Activated CD4-positive, alpha-beta T cell treated with anti-CD3 and anti-CD28 coated beads for 36 hours (primary cell): ENCODE measurements at regions of chr13 and their contacts with region 1.

Region 1: DNA sequence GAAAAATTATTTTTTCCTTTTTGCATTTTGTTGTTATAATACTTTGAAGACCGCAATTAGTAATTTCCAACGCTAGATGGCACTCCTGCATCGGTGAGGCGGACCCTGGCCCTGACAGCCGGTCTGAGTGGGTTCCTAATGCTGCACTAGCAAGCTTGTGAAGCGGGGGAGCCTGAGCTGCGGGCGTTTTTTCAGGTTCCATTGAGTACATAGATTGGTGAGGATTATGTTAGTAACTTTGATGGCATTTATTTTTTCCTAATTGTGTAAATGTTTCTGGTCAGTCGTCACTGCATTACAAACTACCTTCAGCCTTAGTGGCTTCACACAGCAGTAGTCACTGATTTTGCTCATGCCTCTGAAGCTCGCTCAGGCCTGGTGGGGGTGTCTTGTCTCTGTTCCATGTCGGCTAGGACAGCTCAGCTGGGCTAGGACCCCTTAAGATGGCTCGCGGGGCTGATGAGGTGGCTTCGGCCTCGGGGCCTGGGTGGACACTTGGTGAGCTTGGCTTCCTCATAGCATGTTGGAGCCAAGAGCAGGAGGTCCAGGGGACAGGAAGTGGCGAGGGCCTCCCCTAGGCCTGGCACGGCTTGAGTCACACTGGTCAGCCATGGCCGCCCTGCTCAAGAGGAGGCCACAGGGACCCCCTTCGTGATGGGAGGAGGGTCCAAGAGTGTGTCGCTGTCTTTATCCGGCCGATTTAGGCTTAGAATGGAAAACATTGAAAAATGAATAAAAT is 25.0 kb downstream of the ERCC5 start:
- DNase-seq: peak; percentile 66
- ATAC-seq: peak; percentile 58
- H3K4me3 Mint-ChIP-seq: no peak overlapping the region
- H3K27ac Mint-ChIP-seq: peak overlapping the region; percentile 21
- H3K4me1 Mint-ChIP-seq: peaks cover 30% of the 10 kb centered on the region
- H3K27me3 Mint-ChIP-seq: no peaks in the 10 kb centered on the region

Region 2: GRCh38 chr13:102580552-102581169 is 290.2 kb before region 1 on chr13:
- CTCF ChIA-PET with region 1: interaction called, 11 read pairs
- POLR2A ChIA-PET with region 1: no interaction called
- intact Hi-C with region 1: no loop called
- DNase-seq: peak; percentile 35
- ATAC-seq: peak; percentile 78
- H3K4me3 Mint-ChIP-seq: no peak overlapping the region
- H3K27ac Mint-ChIP-seq: no peak overlapping the region
- H3K4me1 Mint-ChIP-seq: peaks cover 7% of the 10 kb centered on the region
- H3K27me3 Mint-ChIP-seq: peaks cover 7% of the 10 kb centered on the region

Region 3: DNA sequence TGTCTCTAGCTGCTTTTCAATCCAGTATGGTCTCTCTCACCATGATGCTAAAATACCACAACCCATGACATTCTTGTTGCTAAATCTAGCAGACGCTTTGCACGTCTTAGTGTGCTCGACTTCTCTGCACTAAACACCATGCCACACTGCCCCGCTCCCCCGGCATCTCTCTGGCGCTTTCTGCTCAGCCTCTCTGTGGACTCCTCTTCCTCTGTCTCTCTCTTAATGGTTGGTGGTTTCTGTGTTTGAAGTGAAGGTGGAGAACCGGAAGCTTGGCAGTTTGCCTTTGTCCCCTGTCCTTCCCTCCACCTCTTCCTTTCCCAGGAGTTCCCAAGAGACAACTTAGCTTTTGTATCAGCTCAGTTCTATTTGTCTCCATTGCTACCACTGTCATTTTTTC is 16.2 kb before region 1 on chr13:
- CTCF ChIA-PET with region 1: interaction called, 24 read pairs
- POLR2A ChIA-PET with region 1: no interaction called
- intact Hi-C with region 1: no loop called
- DNase-seq: peak; percentile 30
- ATAC-seq: peak; percentile 74
- H3K4me3 Mint-ChIP-seq: no peak overlapping the region
- H3K27ac Mint-ChIP-seq: peak overlapping the region; percentile 74
- H3K4me1 Mint-ChIP-seq: peaks cover 37% of the 10 kb centered on the region
- H3K27me3 Mint-ChIP-seq: no peaks in the 10 kb centered on the region

Region 4: GRCh38 chr13:103762523-103762922 is 891.7 kb after region 1 on chr13:
- CTCF ChIA-PET with region 1: no interaction called
- POLR2A ChIA-PET with region 1: no interaction called
- intact Hi-C with region 1: no loop called
- DNase-seq: no peak
- ATAC-seq: no peak
- H3K4me3 Mint-ChIP-seq: no peak overlapping the region
- H3K27ac Mint-ChIP-seq: no peak overlapping the region
- H3K4me1 Mint-ChIP-seq: no peaks in the 10 kb centered on the region
- H3K27me3 Mint-ChIP-seq: no peaks in the 10 kb centered on the region